OCI-LY7 (cell line): ENCODE measurements at regions of chr9 and their contacts with region 1.

Region 1: GRCh38 chr9:22469928-22470544 is 23.4 kb downstream of the DMRTA1 start:
- DNase-seq: peak; percentile 88
- H3K4me3 ChIP-seq: no peak overlapping the region
- H3K27ac ChIP-seq: no peak overlapping the region
- H3K4me1 ChIP-seq: peaks cover 45% of the 10 kb centered on the region
- CTCF ChIP-seq: peak; percentile 98

Region 2: GRCh38 chr9:22522206-22522740 is 52.2 kb after region 1 on chr9:
- CTCF ChIA-PET with region 1: interaction called, 7 read pairs
- POLR2A ChIA-PET with region 1: interaction called, 11 read pairs
- intact Hi-C with region 1: no loop called
- DNase-seq: peak; percentile 85
- H3K4me3 ChIP-seq: peak overlapping the region; percentile 55
- H3K27ac ChIP-seq: peak overlapping the region; percentile 96
- H3K4me1 ChIP-seq: peaks cover 82% of the 10 kb centered on the region
- CTCF ChIP-seq: no peak

Region 3: DNA sequence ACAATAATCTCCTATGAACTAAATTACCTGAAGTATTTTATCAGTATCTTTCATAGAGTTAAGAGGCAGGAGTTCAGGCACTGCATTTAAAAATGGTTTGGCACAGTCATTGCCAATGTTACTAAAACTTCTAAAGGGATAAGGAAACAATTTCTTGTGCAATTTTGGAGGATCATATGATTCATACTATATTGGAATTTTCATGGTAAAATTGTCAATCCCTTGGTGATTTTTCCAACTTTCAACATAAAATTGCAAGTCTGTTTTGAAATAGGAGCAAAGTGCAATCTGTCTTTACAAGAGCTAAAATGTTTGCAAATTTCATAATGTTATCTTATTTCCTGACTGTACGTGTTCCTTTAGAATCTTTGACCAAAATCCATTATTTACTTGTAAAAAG is 187.7 kb after region 1 on chr9:
- CTCF ChIA-PET with region 1: no interaction called
- POLR2A ChIA-PET with region 1: interaction called, 3 read pairs
- intact Hi-C with region 1: loop called (anchors 10 kb)
- DNase-seq: no peak
- H3K4me3 ChIP-seq: no peak overlapping the region
- H3K27ac ChIP-seq: no peak overlapping the region
- H3K4me1 ChIP-seq: peaks cover 7% of the 10 kb centered on the region
- CTCF ChIP-seq: no peak

Region 4: GRCh38 chr9:22813529-22813928 is 343.5 kb after region 1 on chr9:
- CTCF ChIA-PET with region 1: no interaction called
- POLR2A ChIA-PET with region 1: no interaction called
- intact Hi-C with region 1: loop called (anchors 5 kb)
- DNase-seq: peak; percentile 35
- H3K4me3 ChIP-seq: no peak overlapping the region
- H3K27ac ChIP-seq: no peak overlapping the region
- H3K4me1 ChIP-seq: no peaks in the 10 kb centered on the region
- CTCF ChIP-seq: peak; percentile 72

Region 5: DNA sequence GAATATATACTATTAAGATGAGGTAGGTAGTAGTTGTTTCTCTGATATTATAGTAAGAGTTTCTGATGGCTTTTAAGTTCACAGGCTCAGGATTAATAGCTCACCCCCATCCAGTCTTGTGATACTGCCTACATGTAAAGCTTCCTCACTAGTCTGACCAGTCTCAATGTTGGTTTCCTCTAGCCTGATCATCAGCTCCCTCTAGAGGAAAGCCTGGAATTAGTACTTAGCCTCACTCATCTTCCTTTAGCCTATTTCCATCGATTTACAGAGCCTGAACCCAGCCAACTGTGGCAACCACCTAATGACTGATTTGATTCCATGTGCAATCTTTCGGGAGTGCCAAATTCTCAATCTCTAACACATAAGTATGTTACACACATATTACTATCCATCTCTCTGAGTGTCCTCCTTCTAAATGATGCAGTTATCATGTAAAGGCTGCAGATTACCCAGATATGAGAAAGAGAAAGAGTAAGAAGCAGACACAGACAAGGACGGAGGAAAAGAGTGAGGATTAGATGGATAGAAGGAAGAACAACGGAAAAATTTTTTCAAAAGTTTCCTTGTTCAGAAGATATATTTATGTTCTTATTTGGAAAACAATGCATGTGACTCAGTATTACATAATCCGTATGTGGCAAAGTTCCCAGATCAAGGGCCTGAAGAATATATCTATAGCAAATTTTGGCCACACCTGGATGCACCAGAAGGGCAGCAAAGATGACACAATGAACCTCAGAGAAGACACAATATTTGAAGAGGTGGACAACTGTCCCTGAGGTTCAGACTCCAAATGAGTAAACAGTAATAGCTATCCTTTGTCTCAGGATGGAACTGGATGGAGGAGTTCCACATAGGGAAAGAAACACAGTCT is 1022.3 kb after region 1 on chr9:
- CTCF ChIA-PET with region 1: no interaction called
- POLR2A ChIA-PET with region 1: no interaction called
- intact Hi-C with region 1: loop called (anchors 5 kb)
- DNase-seq: peak; percentile 37
- H3K4me3 ChIP-seq: no peak overlapping the region
- H3K27ac ChIP-seq: no peak overlapping the region
- H3K4me1 ChIP-seq: no peaks in the 10 kb centered on the region
- CTCF ChIP-seq: peak; percentile 78